ENCODE measurements at regions of chr12 and their contacts with region 1.

Region 1: DNA sequence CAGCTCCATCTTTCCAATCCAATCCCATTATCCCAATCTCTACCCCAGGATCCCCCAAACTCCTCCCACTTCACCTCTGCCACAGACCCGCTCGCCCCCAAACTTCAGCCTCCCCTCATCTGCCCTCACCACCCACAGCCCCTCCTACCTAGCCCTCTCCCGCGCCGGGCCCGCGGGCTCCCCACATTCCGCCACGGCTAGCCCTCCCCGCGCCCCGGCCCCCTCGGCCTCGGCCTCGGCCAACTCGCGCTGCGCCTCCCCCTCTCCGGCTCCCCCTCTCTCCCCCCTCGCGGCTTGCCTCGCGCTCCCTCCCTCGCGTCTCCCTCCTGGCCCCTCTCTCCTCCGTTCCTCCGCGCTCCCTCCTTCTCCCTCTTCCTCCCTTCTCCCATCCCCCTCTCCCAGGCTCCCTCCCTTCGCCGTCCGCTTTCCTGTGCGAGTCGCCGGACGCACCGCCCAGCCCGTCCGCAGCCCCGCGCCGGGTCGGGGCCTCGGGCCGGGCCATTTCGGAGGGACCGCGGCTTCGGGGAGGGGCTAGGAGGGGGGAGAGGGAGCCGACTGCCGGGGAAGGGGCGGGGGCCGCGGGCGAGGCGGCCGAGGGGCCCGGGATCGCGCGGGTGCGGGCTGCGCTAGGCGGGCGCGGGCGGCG is at the start of gene ATN1:
- DNase-seq: peak; percentile 48
- H3K4me3 ChIP-seq: peak within 1 kb of the TSS; percentile 82 to 85 (median 84)
- H3K27ac ChIP-seq: peak within 1 kb of the TSS; percentile 65
- H3K4me1 ChIP-seq: peaks cover 46% of the 10 kb centered on the region
- H3K27me3 ChIP-seq: no peaks in the 10 kb centered on the region
- CTCF ChIP-seq: no peak
- total RNA-seq, gene ATN1: 12.2 to 73.5 TPM

Region 2: GRCh38 chr12:6890789-6891645 is 36.5 kb before region 1 on chr12:
- CTCF ChIA-PET with region 1: no interaction called
- dilution Hi-C with region 1: no loop called
- in situ Hi-C with region 1: no loop called
- intact Hi-C with region 1: loop called (anchors 1 kb)
- DNase-seq: peak; percentile 94
- H3K4me3 ChIP-seq: peak overlapping the region; percentile 30 to 57 (median 35)
- H3K27ac ChIP-seq: peak overlapping the region; percentile 76
- H3K4me1 ChIP-seq: peaks cover 12% of the 10 kb centered on the region
- H3K27me3 ChIP-seq: no peaks in the 10 kb centered on the region
- CTCF ChIP-seq: peak; percentile 56 to 66

Region 3: GRCh38 chr12:6944381-6945186 is 17.1 kb after region 1 on chr12:
- CTCF ChIA-PET with region 1: interaction called, 5 read pairs
- dilution Hi-C with region 1: no loop called
- in situ Hi-C with region 1: no loop called
- intact Hi-C with region 1: loop called (anchors 1 kb)
- DNase-seq: no peak
- H3K4me3 ChIP-seq: peak overlapping the region; percentile 36 to 64 (median 47)
- H3K27ac ChIP-seq: peak overlapping the region; percentile 94
- H3K4me1 ChIP-seq: peaks cover 29% of the 10 kb centered on the region
- H3K27me3 ChIP-seq: no peaks in the 10 kb centered on the region
- CTCF ChIP-seq: peak; percentile 55 to 77

Region 4: DNA sequence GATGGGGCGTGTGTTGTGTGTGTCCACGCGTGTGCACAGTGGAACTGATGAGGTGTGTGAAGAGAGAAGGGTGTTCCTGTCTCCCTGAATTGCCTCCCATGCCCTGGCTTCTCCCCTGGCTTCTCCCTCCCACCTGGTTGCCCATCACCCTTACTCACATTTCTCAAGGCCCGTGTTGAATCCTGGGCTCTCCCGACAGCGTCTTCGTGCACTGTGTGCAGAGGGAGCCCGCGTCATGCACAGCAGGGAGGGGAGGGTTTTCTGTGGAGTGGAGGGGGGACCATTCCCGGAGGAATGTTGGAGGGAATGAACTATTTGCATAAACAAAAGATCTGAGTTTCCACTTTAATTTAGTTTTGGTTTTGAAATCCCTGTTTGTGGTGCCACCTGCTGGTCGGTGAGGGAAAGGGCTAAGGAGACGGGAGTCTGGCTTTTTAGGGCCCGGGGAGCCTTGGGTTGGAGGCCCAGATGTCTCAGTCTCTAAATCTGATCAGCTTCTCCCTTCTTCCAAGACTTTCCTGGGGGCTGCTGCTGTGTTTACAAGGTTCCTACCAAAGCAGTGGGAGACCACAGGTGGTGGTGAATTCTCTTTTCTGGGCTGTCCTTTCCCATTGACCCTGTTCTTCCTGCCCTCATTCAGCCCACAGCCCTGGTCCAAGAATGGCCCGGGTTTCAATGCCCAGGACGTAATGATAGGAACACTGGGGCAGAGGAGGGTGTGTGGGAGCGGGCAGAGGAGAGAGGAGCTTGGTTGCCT is 164.9 kb after region 1 on chr12 and contains the start of gene C1R:
- CTCF ChIA-PET with region 1: no interaction called
- dilution Hi-C with region 1: no loop called
- in situ Hi-C with region 1: no loop called
- intact Hi-C with region 1: loop called (anchors 1 kb)
- DNase-seq: peak; percentile 48
- H3K4me3 ChIP-seq: peak within 1 kb of the TSS; percentile 27 to 46 (median 45)
- H3K27ac ChIP-seq: no peak within 1 kb of the TSS
- H3K4me1 ChIP-seq: peaks cover 9% of the 10 kb centered on the region
- H3K27me3 ChIP-seq: no peaks in the 10 kb centered on the region
- CTCF ChIP-seq: peak; percentile 84 to 87
- total RNA-seq, gene C1R: 6.1 to 16.3 TPM

Region 5: GRCh38 chr12:7188562-7189397 is 261.3 kb after region 1 on chr12:
- CTCF ChIA-PET with region 1: no interaction called
- dilution Hi-C with region 1: no loop called
- in situ Hi-C with region 1: no loop called
- intact Hi-C with region 1: loop called (anchors 2 kb)
- DNase-seq: peak; percentile 61
- H3K4me3 ChIP-seq: peak overlapping the region; percentile 45 to 99 (median 92)
- H3K27ac ChIP-seq: peak overlapping the region; percentile 76
- H3K4me1 ChIP-seq: peaks cover 18% of the 10 kb centered on the region
- H3K27me3 ChIP-seq: no peaks in the 10 kb centered on the region
- CTCF ChIP-seq: peak; percentile 73 to 92

Measured in mammary epithelial cell (primary cell).